ENCODE measurements at regions of chr9 and their contacts with region 1.

Region 1: DNA sequence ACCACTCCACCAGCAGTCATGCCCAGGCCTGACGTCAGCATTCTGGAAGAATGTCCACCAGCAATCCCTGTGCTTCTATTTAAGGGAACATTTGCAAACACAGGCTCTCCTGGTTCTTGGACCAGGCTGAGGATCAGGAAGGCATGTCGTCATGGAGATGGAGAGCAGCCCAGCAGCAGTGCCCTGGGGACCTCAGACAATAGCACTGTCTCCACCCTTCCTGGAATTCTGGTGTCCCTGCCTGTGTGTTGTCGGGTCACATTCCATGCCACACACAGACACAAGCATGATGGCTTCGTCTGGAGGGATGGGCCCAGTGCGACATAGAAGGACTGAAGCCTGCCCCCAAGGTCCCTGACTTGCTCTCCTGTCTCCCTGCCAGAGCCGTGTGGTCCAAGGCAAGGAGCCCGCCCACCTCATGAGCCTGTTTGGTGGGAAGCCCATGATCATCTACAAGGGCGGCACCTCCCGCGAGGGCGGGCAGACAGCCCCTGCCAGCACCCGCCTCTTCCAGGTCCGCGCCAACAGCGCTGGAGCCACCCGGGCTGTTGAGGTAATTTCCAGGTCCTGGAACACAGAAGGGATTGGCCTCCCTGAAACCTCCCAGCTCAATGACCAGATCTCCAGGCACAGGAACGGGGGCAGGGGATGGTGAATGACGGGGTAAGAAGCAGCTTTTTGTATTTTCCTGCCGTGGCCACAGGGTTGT is 43.8 kb downstream of the STOM start:
- DNase-seq: peak; percentile 42 to 84
- ATAC-seq: no peak

Region 2: DNA sequence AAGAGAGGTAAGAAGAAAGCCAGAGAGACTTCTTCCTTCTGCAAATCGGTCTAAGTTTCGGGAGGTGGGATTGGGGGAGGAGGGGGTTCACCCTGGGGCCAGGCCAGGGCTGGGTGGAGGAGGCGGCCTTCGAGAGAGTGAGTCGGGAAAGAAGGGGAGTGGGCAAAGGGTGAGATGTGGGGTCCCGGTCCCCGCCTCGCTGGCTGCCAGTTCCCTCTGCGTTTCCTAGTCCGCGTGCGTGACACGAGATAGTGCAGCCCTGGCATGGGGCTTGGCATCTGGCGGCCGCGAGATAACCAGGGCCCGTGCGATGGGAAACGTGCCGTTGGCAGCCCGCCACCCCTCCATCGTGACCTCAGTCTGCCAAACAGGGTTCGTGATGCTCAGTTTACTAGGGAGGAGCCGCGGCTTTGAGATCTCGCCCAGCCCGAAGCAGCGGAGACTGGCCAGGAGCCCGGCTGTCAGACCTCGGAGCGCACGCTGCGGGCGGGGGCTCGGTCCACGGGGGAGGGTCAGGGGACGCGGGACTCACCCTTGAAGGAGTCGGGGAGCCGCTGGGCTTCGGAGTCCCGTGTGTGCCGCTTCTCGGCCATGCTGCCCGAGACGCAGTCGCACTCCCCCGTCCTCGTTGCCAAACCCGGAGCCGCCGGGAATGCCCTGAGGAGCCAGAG is 43.4 kb after region 1 on chr9 and contains the start of gene STOM:
- intact Hi-C with region 1: loop called in 1 of 2 experiments (anchors 10 kb)
- DNase-seq: peak; percentile 81 to 84
- ATAC-seq: peak; percentile 61
- total RNA-seq, gene STOM: 94.6 to 115 TPM

Region 3: GRCh38 chr9:121388140-121388905 is 62.0 kb after region 1 on chr9:
- intact Hi-C with region 1: no loop called
- DNase-seq: no peak
- ATAC-seq: no peak

Region 4: GRCh38 chr9:121744002-121744686 is 417.9 kb after region 1 on chr9:
- intact Hi-C with region 1: no loop called
- DNase-seq: peak; percentile 68 to 73
- ATAC-seq: peak; percentile 66

Region 5: GRCh38 chr9:121798941-121799340 is 472.7 kb after region 1 on chr9:
- intact Hi-C with region 1: no loop called
- DNase-seq: no peak
- ATAC-seq: no peak